GM12878 (cell line): ENCODE measurements at regions of chr16 and their contacts with region 1.

Region 1: GRCh38 chr16:9791556-9791955 is 390.7 kb downstream of the GRIN2A start:
- DNase-seq: no peak
- ATAC-seq: no peak
- H3K4me3 ChIP-seq: no peak overlapping the region
- H3K27ac ChIP-seq: no peak overlapping the region
- H3K4me1 ChIP-seq: no peaks in the 10 kb centered on the region
- H3K27me3 ChIP-seq: no peaks in the 10 kb centered on the region
- CTCF ChIP-seq: no peak
- EP300 ChIP-seq: no peak
- POLR2A ChIP-seq: no peak
- RAD21 ChIP-seq: no peak

Region 2: GRCh38 chr16:9813665-9814064 is 22.1 kb after region 1 on chr16:
- CTCF ChIA-PET with region 1: interaction called, 3 read pairs
- POLR2A ChIA-PET with region 1: interaction called, 10 read pairs
- RAD21 ChIA-PET with region 1: no interaction called
- SMC1A ChIA-PET with region 1: no interaction called
- in situ Hi-C with region 1: no loop called
- intact Hi-C with region 1: no loop called
- DNase-seq: no peak
- ATAC-seq: no peak
- H3K4me3 ChIP-seq: no peak overlapping the region
- H3K27ac ChIP-seq: no peak overlapping the region
- H3K4me1 ChIP-seq: no peaks in the 10 kb centered on the region
- H3K27me3 ChIP-seq: no peaks in the 10 kb centered on the region
- CTCF ChIP-seq: no peak
- EP300 ChIP-seq: no peak
- POLR2A ChIP-seq: no peak
- RAD21 ChIP-seq: no peak